ENCODE measurements at regions of chr19 and their contacts with region 1.

Region 1: GRCh38 chr19:48842789-48843162 is 6.5 kb upstream of the HSD17B14 start:
- DNase-seq: peak; percentile 65
- H3K4me3 ChIP-seq: no peak overlapping the region
- H3K27ac ChIP-seq: no peak overlapping the region
- H3K4me1 ChIP-seq: no peaks in the 10 kb centered on the region
- H3K27me3 ChIP-seq: no peaks in the 10 kb centered on the region
- CTCF ChIP-seq: peak; percentile 71 to 85 (median 79)
- POLR2A ChIP-seq: no peak

Region 2: GRCh38 chr19:48646001-48646721 is 196.6 kb before region 1 on chr19 and contains the start of gene CA11:
- intact Hi-C with region 1: loop called (anchors 10 kb)
- DNase-seq: peak; percentile 90
- H3K4me3 ChIP-seq: peak within 1 kb of the TSS; percentile 49 to 66
- H3K27ac ChIP-seq: peak within 1 kb of the TSS; percentile 92 to 96
- H3K4me1 ChIP-seq: peaks cover 17% of the 10 kb centered on the region
- H3K27me3 ChIP-seq: no peaks in the 10 kb centered on the region
- CTCF ChIP-seq: peak; percentile 84 to 92 (median 88)
- POLR2A ChIP-seq: no peak
- total RNA-seq, gene CA11: 6.3 to 6.8 TPM

Region 3: GRCh38 chr19:48795055-48795684 is 47.6 kb before region 1 on chr19:
- intact Hi-C with region 1: loop called (anchors 2 kb)
- DNase-seq: peak; percentile 97
- H3K4me3 ChIP-seq: peak overlapping the region; percentile 19 to 61
- H3K27ac ChIP-seq: peak overlapping the region; percentile 83 to 84
- H3K4me1 ChIP-seq: peaks cover 12% of the 10 kb centered on the region
- H3K27me3 ChIP-seq: no peaks in the 10 kb centered on the region
- CTCF ChIP-seq: peak; percentile 94 to 98 (median 97)
- POLR2A ChIP-seq: no peak

Measured in testis (tissue), 5 donors.